ENCODE measurements at regions of chr6 and their contacts with region 1.

Region 1: GRCh38 chr6:4788953-4789584 is 12.9 kb downstream of the CDYL start:
- DNase-seq: no peak
- ATAC-seq: no peak
- H3K4me3 Mint-ChIP-seq: no peak overlapping the region
- H3K27ac Mint-ChIP-seq: peak overlapping the region; percentile 50
- H3K4me1 Mint-ChIP-seq: peaks cover 64% of the 10 kb centered on the region
- H3K27me3 Mint-ChIP-seq: no peaks in the 10 kb centered on the region
- CTCF ChIP-seq: no peak

Region 2: GRCh38 chr6:4388675-4389074 is 400.4 kb before region 1 on chr6:
- CTCF ChIA-PET with region 1: no interaction called
- POLR2A ChIA-PET with region 1: no interaction called
- intact Hi-C with region 1: no loop called
- DNase-seq: no peak
- ATAC-seq: no peak
- H3K4me3 Mint-ChIP-seq: no peak overlapping the region
- H3K27ac Mint-ChIP-seq: no peak overlapping the region
- H3K4me1 Mint-ChIP-seq: no peaks in the 10 kb centered on the region
- H3K27me3 Mint-ChIP-seq: peaks cover 2% of the 10 kb centered on the region
- CTCF ChIP-seq: no peak

Region 3: DNA sequence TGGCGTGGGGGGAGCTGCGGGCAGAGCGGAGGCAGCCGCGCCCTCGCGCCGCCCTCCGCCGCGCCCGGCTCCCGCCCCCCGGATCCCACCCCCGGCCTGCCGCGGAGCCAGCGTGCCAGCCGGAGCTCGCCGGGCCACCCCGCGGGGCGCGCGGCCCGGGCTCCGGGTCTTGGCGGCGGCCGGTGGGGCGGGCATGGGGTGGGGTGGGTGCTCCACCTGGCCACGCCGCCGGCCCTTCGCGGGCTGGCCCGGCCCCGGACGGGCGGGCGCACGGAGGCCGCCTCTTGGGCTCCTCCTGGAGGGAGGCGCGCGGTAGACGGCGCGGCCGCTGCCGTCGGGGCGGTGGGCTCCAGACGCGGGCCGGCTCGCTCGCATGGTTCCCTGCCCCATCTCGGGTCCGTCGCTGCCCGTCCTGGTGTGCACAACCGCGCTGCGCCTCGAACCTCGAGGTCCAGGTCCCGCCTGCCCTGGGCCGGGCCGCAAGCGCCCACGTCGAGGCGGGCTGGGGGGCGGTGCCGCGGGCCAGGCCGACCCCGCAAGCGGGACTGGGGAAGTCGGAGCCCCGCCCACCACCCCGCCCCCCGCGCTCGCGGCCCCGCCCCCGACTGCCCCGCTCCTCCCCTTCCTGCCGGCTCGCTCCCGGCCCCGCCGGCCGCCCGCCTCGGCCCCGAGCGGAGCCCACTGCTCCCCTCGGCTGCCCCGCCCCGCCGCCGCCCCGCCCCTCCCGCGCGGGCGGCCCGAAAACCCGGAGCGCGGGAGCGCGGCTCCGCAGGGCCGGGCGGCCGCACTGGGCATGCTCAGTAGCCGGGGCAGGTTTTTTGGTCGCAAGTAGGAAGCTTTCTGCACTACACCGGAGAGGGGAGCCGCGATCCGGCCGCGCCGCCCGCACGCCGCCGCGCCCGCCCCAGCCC is 13.2 kb before region 1 on chr6 and contains the start of gene CDYL:
- CTCF ChIA-PET with region 1: interaction called, 11 read pairs
- POLR2A ChIA-PET with region 1: interaction called, 13 read pairs
- intact Hi-C with region 1: no loop called
- DNase-seq: peak; percentile 85
- ATAC-seq: peak; percentile 83
- H3K4me3 Mint-ChIP-seq: peak within 1 kb of the TSS; percentile 80
- H3K27ac Mint-ChIP-seq: peak within 1 kb of the TSS; percentile 94
- H3K4me1 Mint-ChIP-seq: peaks cover 56% of the 10 kb centered on the region
- H3K27me3 Mint-ChIP-seq: no peaks in the 10 kb centered on the region
- CTCF ChIP-seq: no peak
- total RNA-seq, gene CDYL: 31.1 to 31.2 TPM